Activated B cell treated with CpG ODN at 0.5 μM for 24 hours (primary cell): ENCODE measurements at regions of chr4 and their contacts with region 1.

Region 1: DNA sequence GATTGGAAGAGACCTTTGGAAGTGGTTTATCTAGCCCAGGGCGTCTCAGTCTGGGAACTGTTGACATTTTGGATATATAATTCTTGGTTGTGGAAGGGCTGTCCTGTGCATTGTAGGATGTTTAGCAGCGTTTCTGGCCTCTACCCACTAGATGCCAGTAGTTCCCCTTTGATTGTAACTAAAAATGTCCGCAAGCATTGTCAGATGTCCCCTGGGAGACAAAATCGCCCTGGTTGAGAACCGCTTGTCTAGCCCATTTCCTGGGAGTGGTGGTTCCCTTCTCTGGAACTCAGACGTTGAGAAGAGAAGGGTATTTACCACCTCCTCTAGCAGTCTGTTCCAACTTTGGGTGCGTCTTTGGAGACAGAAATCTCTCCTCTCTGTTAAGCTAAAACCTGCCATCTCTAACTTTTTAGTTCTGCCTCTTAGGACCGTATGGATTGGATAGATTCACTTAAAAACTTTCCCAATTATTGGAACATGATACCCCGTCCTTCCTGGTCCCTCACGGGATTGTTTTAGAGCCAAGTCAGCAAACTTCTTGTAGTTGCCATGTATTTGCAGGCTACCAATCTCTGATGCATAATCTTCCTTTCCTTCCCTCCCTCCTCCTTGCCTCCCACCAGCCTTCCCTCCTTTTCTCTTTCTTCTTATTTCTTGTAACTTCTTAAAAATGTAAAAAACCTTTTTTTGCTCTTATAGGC is 13.9 kb downstream of the TMEM165 start:
- DNase-seq: no peak
- ATAC-seq: peak; percentile 90
- H3K4me3 Mint-ChIP-seq: peak overlapping the region; percentile 32
- H3K27ac Mint-ChIP-seq: peak overlapping the region; percentile 76
- H3K4me1 Mint-ChIP-seq: peaks cover 25% of the 10 kb centered on the region
- H3K27me3 Mint-ChIP-seq: no peaks in the 10 kb centered on the region
- CTCF ChIP-seq: no peak

Region 2: DNA sequence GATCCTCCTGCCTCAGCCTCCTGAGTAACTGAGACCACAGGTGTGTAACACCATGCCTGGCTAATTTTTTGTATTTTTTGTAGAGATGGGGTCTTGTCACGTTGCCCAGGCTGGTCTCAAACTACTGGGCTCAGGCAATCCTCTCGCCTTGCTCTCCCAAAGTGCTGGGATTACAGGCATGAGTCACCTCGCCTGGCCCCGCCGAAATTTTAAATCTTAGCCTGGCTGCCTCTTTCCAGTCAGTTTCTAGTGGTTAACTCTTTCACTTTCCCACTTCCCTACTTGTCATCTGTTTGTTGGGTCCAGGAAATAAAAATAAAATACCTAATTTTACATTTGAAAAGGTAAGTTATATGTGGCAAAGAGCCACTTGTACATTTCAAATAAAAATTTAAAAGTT is 48.5 kb after region 1 on chr4:
- CTCF ChIA-PET with region 1: no interaction called
- POLR2A ChIA-PET with region 1: no interaction called
- intact Hi-C with region 1: no loop called
- DNase-seq: no peak
- ATAC-seq: no peak
- H3K4me3 Mint-ChIP-seq: no peak overlapping the region
- H3K27ac Mint-ChIP-seq: no peak overlapping the region
- H3K4me1 Mint-ChIP-seq: no peaks in the 10 kb centered on the region
- H3K27me3 Mint-ChIP-seq: no peaks in the 10 kb centered on the region
- CTCF ChIP-seq: no peak

Region 3: GRCh38 chr4:55554453-55555030 is 144.9 kb after region 1 on chr4:
- CTCF ChIA-PET with region 1: interaction called, 10 read pairs
- POLR2A ChIA-PET with region 1: no interaction called
- intact Hi-C with region 1: loop called (anchors 1 kb)
- DNase-seq: no peak
- ATAC-seq: no peak
- H3K4me3 Mint-ChIP-seq: no peak overlapping the region
- H3K27ac Mint-ChIP-seq: no peak overlapping the region
- H3K4me1 Mint-ChIP-seq: peaks cover 3% of the 10 kb centered on the region
- H3K27me3 Mint-ChIP-seq: peaks cover 11% of the 10 kb centered on the region
- CTCF ChIP-seq: no peak

Region 4: DNA sequence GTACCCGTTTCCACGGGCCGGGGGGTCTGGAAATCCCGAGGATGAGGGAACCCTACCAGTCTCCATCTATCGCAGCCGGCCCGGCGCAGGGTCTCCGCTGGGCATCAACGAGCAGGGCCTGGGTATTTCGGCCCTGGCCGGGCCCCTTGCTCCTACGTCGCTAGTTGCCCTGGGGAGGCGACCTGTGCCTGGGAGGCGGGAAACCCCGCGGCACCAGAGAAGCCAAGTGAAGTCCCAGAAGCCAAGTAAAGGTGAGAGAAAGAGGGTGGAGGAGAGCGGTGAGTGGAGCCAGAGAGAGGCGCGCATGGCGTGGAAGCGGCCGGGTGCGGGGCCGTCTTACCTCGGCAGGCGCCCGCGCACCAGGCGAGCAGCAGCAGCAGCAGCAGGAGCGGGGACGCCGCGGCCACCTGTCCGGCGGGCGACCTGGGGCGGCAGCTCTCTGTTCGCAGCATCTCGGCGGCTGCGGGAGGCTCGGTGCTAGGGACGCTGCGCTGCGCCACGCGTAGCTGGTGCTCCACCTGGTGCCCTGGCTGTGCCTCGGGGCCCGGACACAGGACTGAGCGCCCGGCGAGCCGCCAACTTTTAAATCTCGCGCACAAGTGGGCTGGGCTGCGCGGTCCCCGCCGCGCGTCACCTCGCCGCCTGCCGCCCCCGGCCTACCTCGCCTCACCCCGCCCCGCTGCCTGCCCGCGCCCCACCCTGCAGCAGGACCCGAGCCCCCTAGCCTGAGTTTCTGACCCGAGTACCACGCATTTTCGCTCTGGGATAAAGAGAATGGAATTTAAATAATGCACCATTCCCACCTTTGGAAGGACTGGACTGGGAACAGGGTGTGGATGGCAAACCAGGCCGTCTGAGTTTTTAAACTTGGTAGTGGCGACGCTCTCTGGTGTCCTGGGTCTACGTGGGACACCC is 226.4 kb after region 1 on chr4 and contains the start of gene NMU:
- CTCF ChIA-PET with region 1: no interaction called
- POLR2A ChIA-PET with region 1: no interaction called
- intact Hi-C with region 1: loop called (anchors 1 kb)
- DNase-seq: peak; percentile 20
- ATAC-seq: peak; percentile 70
- H3K4me3 Mint-ChIP-seq: peak within 1 kb of the TSS; percentile 73
- H3K27ac Mint-ChIP-seq: no peak within 1 kb of the TSS
- H3K4me1 Mint-ChIP-seq: peaks cover 15% of the 10 kb centered on the region
- H3K27me3 Mint-ChIP-seq: peaks cover 36% of the 10 kb centered on the region
- CTCF ChIP-seq: no peak
- total RNA-seq, gene NMU: not detected in 2 replicates

Region 5: GRCh38 chr4:55736605-55737183 is 327.1 kb after region 1 on chr4:
- CTCF ChIA-PET with region 1: interaction called, 7 read pairs
- POLR2A ChIA-PET with region 1: no interaction called
- intact Hi-C with region 1: loop called (anchors 1 kb)
- DNase-seq: no peak
- ATAC-seq: no peak
- H3K4me3 Mint-ChIP-seq: no peak overlapping the region
- H3K27ac Mint-ChIP-seq: no peak overlapping the region
- H3K4me1 Mint-ChIP-seq: no peaks in the 10 kb centered on the region
- H3K27me3 Mint-ChIP-seq: peaks cover 32% of the 10 kb centered on the region
- CTCF ChIP-seq: no peak

Region 6: DNA sequence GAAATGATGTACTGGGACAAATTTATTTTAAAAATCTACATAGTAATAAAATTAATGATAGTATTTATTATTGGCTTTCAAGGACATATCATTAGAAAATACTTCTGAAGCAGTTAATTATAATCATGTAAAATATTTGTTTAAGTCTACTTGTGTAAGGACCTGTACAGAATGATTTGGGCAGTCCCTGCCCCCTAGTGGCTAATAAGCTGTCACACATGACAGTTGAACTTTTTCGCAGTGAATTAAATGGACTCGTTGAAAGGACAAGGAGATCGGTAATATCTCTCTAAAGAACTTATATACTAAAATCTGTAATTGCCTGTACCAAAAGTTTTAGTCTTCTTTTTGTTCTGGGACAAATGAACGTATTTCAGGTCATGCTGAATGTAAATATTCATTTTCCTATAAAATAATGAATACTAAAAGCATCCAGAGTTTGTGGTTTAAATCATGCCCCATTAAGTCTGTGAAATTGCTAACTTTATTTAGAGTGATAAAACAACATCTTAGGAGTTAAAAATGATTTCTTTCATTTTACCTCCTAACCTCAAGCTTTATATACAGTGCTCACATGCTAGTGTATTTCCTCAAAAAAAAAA is 457.5 kb after region 1 on chr4:
- CTCF ChIA-PET with region 1: interaction called, 15 read pairs
- POLR2A ChIA-PET with region 1: no interaction called
- intact Hi-C with region 1: loop called (anchors 1 kb)
- DNase-seq: no peak
- ATAC-seq: peak; percentile 84
- H3K4me3 Mint-ChIP-seq: no peak overlapping the region
- H3K27ac Mint-ChIP-seq: no peak overlapping the region
- H3K4me1 Mint-ChIP-seq: peaks cover 22% of the 10 kb centered on the region
- H3K27me3 Mint-ChIP-seq: no peaks in the 10 kb centered on the region
- CTCF ChIP-seq: no peak

Region 7: GRCh38 chr4:55879204-55879603 is 469.6 kb after region 1 on chr4:
- CTCF ChIA-PET with region 1: no interaction called
- POLR2A ChIA-PET with region 1: no interaction called
- intact Hi-C with region 1: no loop called
- DNase-seq: no peak
- ATAC-seq: no peak
- H3K4me3 Mint-ChIP-seq: no peak overlapping the region
- H3K27ac Mint-ChIP-seq: no peak overlapping the region
- H3K4me1 Mint-ChIP-seq: no peaks in the 10 kb centered on the region
- H3K27me3 Mint-ChIP-seq: no peaks in the 10 kb centered on the region
- CTCF ChIP-seq: no peak

Region 8: DNA sequence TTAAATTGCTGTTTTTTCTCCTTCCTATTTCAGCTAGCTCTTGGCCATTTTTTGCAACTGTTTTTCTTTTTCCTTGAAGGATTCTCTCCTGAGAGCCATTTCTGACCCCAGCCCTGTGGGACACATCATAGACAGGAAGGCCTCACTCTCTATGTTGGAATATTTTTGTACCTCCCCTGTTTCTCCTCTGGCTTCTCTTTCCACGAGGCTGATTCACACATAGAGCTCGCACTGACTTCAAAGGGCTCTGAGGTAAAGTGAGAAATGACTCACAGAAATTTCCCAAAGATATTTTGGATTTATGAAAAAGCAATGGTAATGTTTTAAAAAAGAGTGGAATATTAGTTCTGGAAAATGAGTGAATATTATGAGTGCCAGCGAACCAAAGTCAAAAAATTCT is 1882.3 kb after region 1 on chr4:
- CTCF ChIA-PET with region 1: no interaction called
- POLR2A ChIA-PET with region 1: no interaction called
- intact Hi-C with region 1: no loop called
- DNase-seq: no peak
- ATAC-seq: no peak
- H3K4me3 Mint-ChIP-seq: no peak overlapping the region
- H3K27ac Mint-ChIP-seq: no peak overlapping the region
- H3K4me1 Mint-ChIP-seq: no peaks in the 10 kb centered on the region
- H3K27me3 Mint-ChIP-seq: no peaks in the 10 kb centered on the region
- CTCF ChIP-seq: no peak